PC-9 (cell line): ENCODE measurements at regions of chr6 and their contacts with region 1.

Region 1: GRCh38 chr6:21593412-21593926 is at the start of gene SOX4:
- DNase-seq: peak; percentile 90 to 91
- H3K4me3 ChIP-seq: peak within 1 kb of the TSS; percentile 98
- H3K27ac ChIP-seq: peak within 1 kb of the TSS; percentile 73
- H3K4me1 ChIP-seq: peaks cover 15% of the 10 kb centered on the region
- H3K27me3 ChIP-seq: no peaks in the 10 kb centered on the region
- CTCF ChIP-seq: no peak
- total RNA-seq, gene SOX4: 32.8 and 36.1 TPM in 2 replicates

Region 2: GRCh38 chr6:20564269-20564668 is 1029.2 kb before region 1 on chr6:
- CTCF ChIA-PET with region 1: interaction called, 18 read pairs
- POLR2A ChIA-PET with region 1: no interaction called
- intact Hi-C with region 1: loop called (anchors 1 kb)
- DNase-seq: no peak
- H3K4me3 ChIP-seq: no peak overlapping the region
- H3K27ac ChIP-seq: no peak overlapping the region
- H3K4me1 ChIP-seq: no peaks in the 10 kb centered on the region
- H3K27me3 ChIP-seq: no peaks in the 10 kb centered on the region
- CTCF ChIP-seq: peak; percentile 79

Region 3: GRCh38 chr6:21109391-21110178 is 483.9 kb before region 1 on chr6:
- CTCF ChIA-PET with region 1: no interaction called
- POLR2A ChIA-PET with region 1: interaction called, 6 read pairs
- intact Hi-C with region 1: loop called (anchors 10 kb)
- DNase-seq: peak; percentile 20 to 86
- H3K4me3 ChIP-seq: no peak overlapping the region
- H3K27ac ChIP-seq: peak overlapping the region; percentile 32
- H3K4me1 ChIP-seq: peaks cover 48% of the 10 kb centered on the region
- H3K27me3 ChIP-seq: no peaks in the 10 kb centered on the region
- CTCF ChIP-seq: no peak

Region 4: GRCh38 chr6:21679761-21680265 is 86.3 kb after region 1 on chr6:
- CTCF ChIA-PET with region 1: no interaction called
- POLR2A ChIA-PET with region 1: interaction called, 4 read pairs
- intact Hi-C with region 1: loop called (anchors 2 kb)
- DNase-seq: peak; percentile 40 to 72
- H3K4me3 ChIP-seq: no peak overlapping the region
- H3K27ac ChIP-seq: no peak overlapping the region; the same call in 1 of the 2 replicates
- H3K4me1 ChIP-seq: peaks cover 14% of the 10 kb centered on the region; the same call in 1 of the 2 replicates
- H3K27me3 ChIP-seq: no peaks in the 10 kb centered on the region
- CTCF ChIP-seq: no peak

Region 5: GRCh38 chr6:21846541-21847451 is 253.3 kb after region 1 on chr6:
- CTCF ChIA-PET with region 1: no interaction called
- POLR2A ChIA-PET with region 1: no interaction called
- intact Hi-C with region 1: loop called (anchors 10 kb)
- DNase-seq: peak; percentile 10 to 36
- H3K4me3 ChIP-seq: no peak overlapping the region
- H3K27ac ChIP-seq: no peak overlapping the region
- H3K4me1 ChIP-seq: peaks cover 17% of the 10 kb centered on the region
- H3K27me3 ChIP-seq: no peaks in the 10 kb centered on the region
- CTCF ChIP-seq: no peak

Region 6: DNA sequence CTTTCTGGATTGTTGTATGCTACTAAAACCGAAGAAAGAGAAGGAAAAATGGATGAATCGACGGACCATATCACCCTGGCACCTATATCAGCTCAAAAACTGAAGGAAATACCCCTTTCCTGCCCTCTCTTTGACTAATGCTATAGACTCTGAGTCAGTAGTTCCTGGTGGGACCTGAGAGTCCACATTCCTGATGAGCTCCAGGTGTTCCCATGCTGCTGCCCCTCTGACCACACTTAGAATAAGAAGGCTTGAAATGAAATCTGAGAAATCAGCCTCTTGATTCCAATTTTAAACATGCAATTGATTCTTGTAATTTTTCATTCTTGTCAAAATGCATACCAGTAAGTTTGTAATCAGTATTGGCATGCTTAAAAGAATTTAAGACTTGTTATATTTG is 628.2 kb after region 1 on chr6:
- CTCF ChIA-PET with region 1: no interaction called
- POLR2A ChIA-PET with region 1: interaction called, 5 read pairs
- intact Hi-C with region 1: loop called (anchors 5 kb)
- DNase-seq: peak; percentile 75 to 96
- H3K4me3 ChIP-seq: peak overlapping the region; percentile 48
- H3K27ac ChIP-seq: peak overlapping the region; percentile 98
- H3K4me1 ChIP-seq: peaks cover 40% of the 10 kb centered on the region
- H3K27me3 ChIP-seq: no peaks in the 10 kb centered on the region
- CTCF ChIP-seq: no peak

Region 7: GRCh38 chr6:22892452-22892851 is 1299.0 kb after region 1 on chr6:
- CTCF ChIA-PET with region 1: interaction called, 4 read pairs
- POLR2A ChIA-PET with region 1: interaction called, 5 read pairs
- intact Hi-C with region 1: loop called (anchors 5 kb)
- DNase-seq: peak; percentile 53 to 89
- H3K4me3 ChIP-seq: no peak overlapping the region
- H3K27ac ChIP-seq: peak overlapping the region; percentile 90
- H3K4me1 ChIP-seq: peaks cover 25% of the 10 kb centered on the region
- H3K27me3 ChIP-seq: no peaks in the 10 kb centered on the region
- CTCF ChIP-seq: no peak